Activated B cell treated with CpG ODN at 0.5 μM for 24 hours (primary cell): ENCODE measurements at regions of chr16 and their contacts with region 1.

Region 1: DNA sequence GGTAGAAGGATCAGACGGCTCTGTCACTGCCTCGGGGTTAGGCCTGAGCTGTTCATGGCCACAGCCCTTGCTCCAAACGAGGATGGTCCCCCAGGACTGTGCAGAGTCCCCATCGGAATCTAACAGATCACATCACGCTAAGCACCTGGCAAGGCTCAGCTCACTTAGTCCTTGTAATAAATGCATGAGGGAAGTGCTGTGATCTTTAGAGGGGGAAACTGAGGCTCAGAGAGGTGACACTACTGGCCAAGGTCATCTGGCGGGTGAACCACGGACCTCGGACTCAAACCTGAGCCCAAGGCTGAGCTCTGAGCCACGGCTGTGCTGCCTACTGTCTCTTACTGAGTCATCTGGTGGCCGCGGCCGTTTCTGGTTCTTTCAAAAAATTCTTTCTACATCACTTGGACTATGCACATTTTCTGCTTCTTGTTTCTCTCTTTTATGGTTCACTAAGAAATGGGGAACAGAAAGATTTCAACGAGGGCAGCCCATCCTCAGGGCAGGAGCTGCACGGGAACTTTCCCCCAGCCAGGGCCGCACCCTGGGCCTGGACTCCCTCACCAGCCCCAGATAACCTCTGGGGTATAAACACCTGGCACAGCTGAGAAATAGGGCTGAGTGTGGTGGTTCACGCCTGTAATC is 55.6 kb downstream of the COTL1 start:
- DNase-seq: peak; percentile 38
- ATAC-seq: peak; percentile 89
- H3K4me3 Mint-ChIP-seq: peak overlapping the region; percentile 32
- H3K27ac Mint-ChIP-seq: peak overlapping the region; percentile 87
- H3K4me1 Mint-ChIP-seq: peaks cover 36% of the 10 kb centered on the region
- H3K27me3 Mint-ChIP-seq: no peaks in the 10 kb centered on the region
- CTCF ChIP-seq: no peak

Region 2: DNA sequence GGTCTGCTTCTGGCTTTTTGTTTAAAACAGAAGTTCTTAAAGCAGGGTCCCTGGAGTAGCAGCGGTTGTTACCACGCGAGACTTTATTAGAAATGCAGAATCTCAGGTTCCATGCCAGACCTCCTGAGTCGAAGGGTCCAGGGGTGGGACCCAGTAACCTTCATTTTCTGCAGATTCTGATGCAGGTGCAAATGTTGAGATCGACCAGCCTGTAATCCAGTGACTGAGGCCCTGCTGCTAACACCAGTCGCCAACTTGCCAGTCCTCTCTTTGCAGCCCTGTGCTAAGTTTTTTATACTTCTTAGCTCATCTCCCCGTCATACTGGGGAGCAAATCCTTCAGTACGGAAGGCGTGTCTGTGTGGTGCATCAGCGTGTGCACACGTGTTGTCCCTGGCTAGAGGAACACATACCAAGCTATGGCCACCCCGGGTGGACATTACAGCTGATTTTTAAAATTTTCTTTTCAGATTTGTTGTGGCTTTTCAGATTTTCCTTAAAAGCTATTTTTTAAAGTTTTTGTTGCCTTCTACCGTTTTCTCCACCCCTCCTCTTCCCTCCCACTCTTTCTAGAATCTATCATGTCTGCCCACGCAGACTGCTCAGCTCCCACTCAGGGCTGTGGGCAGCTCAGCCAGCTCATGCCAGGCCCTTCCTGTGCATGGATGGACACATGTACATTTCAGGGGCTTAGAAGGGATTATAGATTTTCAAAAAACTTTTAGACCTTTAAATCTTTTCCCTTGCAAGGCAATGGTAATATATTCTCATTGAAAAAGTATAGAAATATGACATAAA is 115.5 kb before region 1 on chr16:
- CTCF ChIA-PET with region 1: no interaction called
- POLR2A ChIA-PET with region 1: no interaction called
- intact Hi-C with region 1: no loop called
- DNase-seq: no peak
- ATAC-seq: no peak
- H3K4me3 Mint-ChIP-seq: no peak overlapping the region
- H3K27ac Mint-ChIP-seq: no peak overlapping the region
- H3K4me1 Mint-ChIP-seq: no peaks in the 10 kb centered on the region
- H3K27me3 Mint-ChIP-seq: peaks cover 21% of the 10 kb centered on the region
- CTCF ChIP-seq: no peak

Region 3: DNA sequence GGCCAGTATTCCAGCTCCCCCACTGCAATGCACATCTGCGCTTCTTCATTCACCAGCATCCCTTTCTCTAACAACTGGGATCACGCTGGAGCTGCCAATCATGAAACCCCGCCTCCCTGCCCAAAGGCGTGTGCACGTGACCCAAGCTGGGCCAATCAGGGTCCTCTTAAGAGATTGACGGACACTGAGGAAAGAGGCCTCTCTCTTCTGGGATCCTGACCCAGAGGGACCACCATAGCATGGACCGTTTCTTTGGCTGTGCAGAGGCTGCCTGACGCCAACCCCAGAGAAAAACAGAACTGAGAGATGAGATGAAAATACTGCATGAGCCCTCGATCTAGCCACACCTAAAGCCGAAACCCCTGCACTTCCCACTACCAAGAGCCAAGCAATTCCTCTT is 23.6 kb after region 1 on chr16:
- CTCF ChIA-PET with region 1: interaction called, 4 read pairs
- POLR2A ChIA-PET with region 1: interaction called, 8 read pairs
- intact Hi-C with region 1: loop called (anchors 1 kb)
- DNase-seq: no peak
- ATAC-seq: peak; percentile 88
- H3K4me3 Mint-ChIP-seq: peak overlapping the region; percentile 82
- H3K27ac Mint-ChIP-seq: peak overlapping the region; percentile 91
- H3K4me1 Mint-ChIP-seq: peaks cover 66% of the 10 kb centered on the region
- H3K27me3 Mint-ChIP-seq: no peaks in the 10 kb centered on the region
- CTCF ChIP-seq: no peak

Region 4: GRCh38 chr16:84593825-84594724 is 31.8 kb after region 1 on chr16:
- CTCF ChIA-PET with region 1: interaction called, 17 read pairs
- POLR2A ChIA-PET with region 1: interaction called, 58 read pairs
- intact Hi-C with region 1: no loop called
- DNase-seq: peak; percentile 65
- ATAC-seq: peak; percentile 82
- H3K4me3 Mint-ChIP-seq: peak overlapping the region; percentile 91
- H3K27ac Mint-ChIP-seq: peak overlapping the region; percentile 91
- H3K4me1 Mint-ChIP-seq: peaks cover 80% of the 10 kb centered on the region
- H3K27me3 Mint-ChIP-seq: no peaks in the 10 kb centered on the region
- CTCF ChIP-seq: no peak

Region 5: GRCh38 chr16:84599521-84600202 is 37.4 kb after region 1 on chr16:
- CTCF ChIA-PET with region 1: interaction called, 17 read pairs
- POLR2A ChIA-PET with region 1: interaction called, 58 read pairs
- intact Hi-C with region 1: loop called (anchors 1 kb)
- DNase-seq: peak; percentile 55
- ATAC-seq: peak; percentile 40
- H3K4me3 Mint-ChIP-seq: peak overlapping the region; percentile 82
- H3K27ac Mint-ChIP-seq: peak overlapping the region; percentile 97
- H3K4me1 Mint-ChIP-seq: peaks cover 94% of the 10 kb centered on the region
- H3K27me3 Mint-ChIP-seq: no peaks in the 10 kb centered on the region
- CTCF ChIP-seq: no peak

Region 6: GRCh38 chr16:84647828-84648594 is 85.7 kb after region 1 on chr16 and contains the start of gene KLHL36:
- CTCF ChIA-PET with region 1: no interaction called
- POLR2A ChIA-PET with region 1: interaction called, 10 read pairs
- intact Hi-C with region 1: no loop called
- DNase-seq: peak; percentile 87
- ATAC-seq: peak; percentile 91
- H3K4me3 Mint-ChIP-seq: peak within 1 kb of the TSS; percentile 87
- H3K27ac Mint-ChIP-seq: peak within 1 kb of the TSS; percentile 90
- H3K4me1 Mint-ChIP-seq: peaks cover 50% of the 10 kb centered on the region
- H3K27me3 Mint-ChIP-seq: no peaks in the 10 kb centered on the region
- CTCF ChIP-seq: no peak
- total RNA-seq, gene KLHL36: 62.6 and 72.7 TPM in 2 replicates